Psoas muscle (tissue), 8 donors: ENCODE measurements at regions of chrX and their contacts with region 1.

Region 1: DNA sequence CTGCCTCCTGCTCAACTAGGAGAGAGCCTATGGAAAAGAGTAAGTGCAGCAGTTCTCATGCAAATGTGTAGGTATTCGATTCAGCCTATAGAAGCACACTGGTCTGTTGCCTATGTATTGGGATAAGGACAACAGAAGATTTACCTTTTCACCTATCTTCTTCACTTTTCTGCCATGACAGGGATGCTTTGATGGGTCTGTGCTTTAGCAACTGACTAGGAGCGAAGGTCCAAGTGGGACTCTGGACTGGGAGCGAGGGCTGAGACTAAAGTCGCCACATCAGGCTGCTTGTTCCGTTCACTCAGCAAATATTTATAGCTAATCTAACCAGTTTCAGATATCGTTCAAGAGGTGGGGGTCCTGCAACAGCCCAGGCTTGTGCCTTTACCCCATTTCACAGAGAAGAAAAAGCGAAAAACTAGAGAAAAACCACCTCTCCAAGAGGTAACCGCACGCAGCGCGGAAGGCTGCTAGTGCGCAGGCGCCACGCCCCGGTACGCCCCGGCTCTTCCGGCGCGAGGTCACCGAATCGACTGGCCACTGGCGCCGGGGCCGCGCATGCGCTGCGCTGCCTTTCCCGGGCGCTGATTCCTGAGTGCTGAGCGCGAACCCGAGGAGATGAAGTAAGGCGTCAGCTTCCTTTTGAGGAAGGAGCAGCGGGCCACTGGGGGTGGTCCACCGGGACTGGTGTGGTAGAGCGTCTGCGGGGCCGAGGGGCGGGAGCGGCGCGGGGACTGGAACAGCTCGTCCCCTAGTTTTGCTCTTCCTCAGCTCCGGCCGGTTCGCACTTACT is at the start of gene RBMX2:
- DNase-seq: peak; percentile 80 to 88
- ATAC-seq: peak; percentile 89 to 100 (median 98)
- H3K4me3 ChIP-seq: peak within 1 kb of the TSS; percentile 64
- H3K27ac ChIP-seq: peak within 1 kb of the TSS; percentile 59
- H3K4me1 ChIP-seq: peaks cover 5% of the 10 kb centered on the region
- H3K27me3 ChIP-seq: peaks cover 0 to 4% (median 0%) of the 10 kb centered on the region in 3 donors
- CTCF ChIP-seq: no peak
- total RNA-seq, gene RBMX2: 7.7 to 12.1 (median 8.3) TPM

Region 2: GRCh38 chrX:130902783-130903613 is 501.4 kb after region 1 on chrX and contains the start of gene ENOX2:
- intact Hi-C with region 1: loop called in 1 of 2 experiments (anchors 5 kb)
- DNase-seq: peak; percentile 89 to 95
- ATAC-seq: peak; percentile 99
- H3K4me3 ChIP-seq: peak within 1 kb of the TSS; percentile 78
- H3K27ac ChIP-seq: peak within 1 kb of the TSS; percentile 90
- H3K4me1 ChIP-seq: no peaks in the 10 kb centered on the region
- H3K27me3 ChIP-seq: peaks cover 0 to 12% (median 0%) of the 10 kb centered on the region in 3 donors
- CTCF ChIP-seq: no peak
- total RNA-seq, gene ENOX2: 8.8 to 13.4 (median 11.4) TPM